RWPE1 (cell line): ENCODE measurements at regions of chr11 and their contacts with region 1.

Region 1: GRCh38 chr11:24760681-24761080 is 263.8 kb downstream of the LUZP2 start:
- DNase-seq: no peak
- H3K27ac ChIP-seq: no peak overlapping the region
- CTCF ChIP-seq: no peak

Region 2: GRCh38 chr11:25094085-25094802 is 333.6 kb after region 1 on chr11:
- CTCF ChIA-PET with region 1: no interaction called
- POLR2A ChIA-PET with region 1: interaction called, 11 read pairs
- DNase-seq: no peak
- H3K27ac ChIP-seq: no peak overlapping the region
- CTCF ChIP-seq: no peak

Region 3: GRCh38 chr11:25198704-25199103 is 438.0 kb after region 1 on chr11:
- CTCF ChIA-PET with region 1: no interaction called
- POLR2A ChIA-PET with region 1: no interaction called
- DNase-seq: no peak
- H3K27ac ChIP-seq: no peak overlapping the region
- CTCF ChIP-seq: no peak